ENCODE measurements at regions of chr3 and their contacts with region 1.

Region 1: DNA sequence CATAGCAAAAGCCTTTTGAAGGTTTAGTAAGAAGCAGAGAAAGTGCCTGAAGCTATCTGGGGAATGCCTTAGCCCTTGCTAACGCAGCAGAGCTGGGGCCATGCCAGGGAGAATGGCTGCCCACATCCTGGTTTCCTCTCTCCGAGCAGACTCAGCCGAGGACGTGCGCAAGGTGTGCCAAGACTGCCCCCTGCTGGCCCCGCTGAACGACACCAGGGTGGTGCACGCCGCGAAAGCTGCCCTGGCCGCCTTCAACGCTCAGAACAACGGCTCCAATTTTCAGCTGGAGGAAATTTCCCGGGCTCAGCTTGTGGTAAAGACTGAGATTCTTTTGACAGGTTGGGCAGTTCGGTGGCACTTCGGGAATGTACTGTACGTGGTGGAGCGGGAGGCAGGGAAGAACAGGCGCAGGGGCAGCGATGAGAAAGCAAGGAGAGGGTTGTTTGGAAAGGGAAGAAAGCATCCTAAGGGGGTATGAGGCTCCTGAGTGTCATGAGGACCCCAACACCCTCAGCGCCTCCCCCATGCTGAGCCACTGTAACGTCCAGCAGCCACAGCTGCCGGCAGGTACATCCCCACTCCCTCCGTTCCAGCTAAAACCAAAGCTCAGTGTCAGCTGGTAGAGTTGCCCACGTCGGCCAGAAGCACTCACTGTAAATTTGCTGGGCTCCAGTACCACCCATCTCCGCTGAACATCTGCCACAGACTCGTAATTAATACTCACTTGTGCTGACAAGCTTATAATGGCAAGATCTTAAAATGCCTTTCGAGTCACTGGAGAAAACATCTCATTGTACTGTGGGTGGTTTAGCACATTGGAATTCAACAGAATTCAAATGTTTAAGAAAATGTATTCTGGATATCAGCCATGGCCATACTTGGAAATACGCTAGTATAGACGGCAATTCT is 4.4 kb downstream of the AHSG start:
- DNase-seq: peak; percentile 87
- ATAC-seq: peak; percentile 96

Region 2: GRCh38 chr3:186754006-186754405 is 136.7 kb after region 1 on chr3:
- intact Hi-C with region 1: loop called (anchors 5 kb)
- DNase-seq: no peak
- ATAC-seq: no peak

Region 3: GRCh38 chr3:186826976-186827731 is 209.9 kb after region 1 on chr3:
- intact Hi-C with region 1: loop called (anchors 10 kb)
- DNase-seq: peak; percentile 91
- ATAC-seq: peak; percentile 98